CD8-positive, alpha-beta memory T cell (primary cell): ENCODE measurements at regions of chr20 and their contacts with region 1.

Region 1: DNA sequence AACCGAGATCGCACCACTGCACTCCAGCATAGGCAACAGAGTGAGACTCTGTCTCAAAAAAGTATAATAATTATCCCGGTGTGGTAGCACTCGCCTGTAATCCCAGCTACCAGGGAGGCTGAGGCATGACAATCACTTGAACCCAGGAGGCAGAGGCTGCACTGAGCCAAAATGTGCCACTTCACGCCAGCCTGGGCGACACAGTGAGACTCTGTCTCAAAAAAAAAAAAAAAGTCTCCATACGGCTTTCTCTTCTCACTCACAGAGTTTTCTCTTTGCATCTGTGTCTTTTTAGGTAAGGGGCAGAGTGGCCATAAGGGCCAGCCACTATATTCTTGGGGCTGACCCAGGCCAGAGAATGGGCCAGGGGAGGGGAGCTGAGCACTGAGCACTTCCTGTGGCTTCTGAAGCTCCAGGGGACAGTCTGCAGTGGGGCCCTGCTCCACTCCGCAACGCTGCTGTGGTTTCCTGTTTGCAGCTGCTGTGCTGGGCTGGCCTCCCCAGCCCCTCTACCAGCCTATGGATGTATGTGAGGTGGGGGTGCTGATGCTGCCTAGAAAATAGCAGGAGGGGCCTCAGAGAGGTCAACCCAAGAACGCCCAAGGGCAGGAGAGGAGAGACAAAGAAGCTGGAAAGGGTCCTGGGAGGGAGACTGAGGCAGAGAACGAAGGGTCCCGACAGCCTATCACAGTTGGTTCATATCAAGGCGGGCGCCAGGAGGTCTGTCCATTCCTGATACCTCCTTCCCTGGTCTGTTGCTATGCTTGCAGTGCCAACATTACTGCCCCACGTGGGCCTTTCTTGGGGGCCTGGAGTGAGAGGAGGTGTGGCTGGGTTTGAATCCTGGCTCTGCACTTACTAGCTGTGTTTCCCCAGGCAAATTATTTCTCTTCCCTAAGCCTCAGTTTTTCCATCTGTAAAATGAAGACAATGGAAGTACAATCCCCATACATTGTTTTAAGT is 16.0 kb downstream of the SLA2 start:
- DNase-seq: peak in 4 of 5 donors; percentile 31 to 75 (median 52)
- H3K4me3 ChIP-seq: peak overlapping the region; percentile 28
- H3K4me3 Mint-ChIP-seq: peak overlapping the region; percentile 43 to 87 (median 82)
- H3K27ac ChIP-seq: peak overlapping the region; percentile 25
- H3K27ac Mint-ChIP-seq: peak overlapping the region; percentile 97 to 98 (median 97)
- H3K4me1 ChIP-seq: peaks cover 39% of the 10 kb centered on the region
- H3K4me1 Mint-ChIP-seq: peaks cover 47 to 76% (median 56%) of the 10 kb centered on the region in 3 donors
- H3K27me3 ChIP-seq: no peaks in the 10 kb centered on the region
- H3K27me3 Mint-ChIP-seq: no peaks in the 10 kb centered on the region

Region 2: DNA sequence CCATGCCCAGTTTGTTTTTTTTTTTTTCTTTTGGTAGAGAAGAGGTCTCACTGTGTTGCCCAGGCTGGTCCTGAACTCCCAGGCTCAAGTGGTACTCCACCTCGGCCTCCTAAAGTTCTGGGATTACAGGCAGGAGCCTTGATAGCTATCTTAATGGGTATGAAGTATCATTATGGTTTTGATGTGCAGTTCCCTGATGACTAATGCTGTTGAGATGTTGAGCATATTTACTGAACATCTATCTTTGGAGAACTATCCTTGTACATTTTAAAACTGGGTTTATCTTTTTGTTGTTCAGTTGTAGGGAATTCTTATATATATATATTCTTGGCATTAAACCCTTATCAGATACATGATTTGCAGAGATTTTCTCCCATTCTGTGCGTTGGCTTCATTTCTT is 110.1 kb before region 1 on chr20:
- CTCF ChIA-PET with region 1: no interaction called
- POLR2A ChIA-PET with region 1: no interaction called
- DNase-seq: no peak
- H3K4me3 ChIP-seq: no peak overlapping the region
- H3K4me3 Mint-ChIP-seq: no peak overlapping the region
- H3K27ac ChIP-seq: no peak overlapping the region
- H3K27ac Mint-ChIP-seq: peak overlapping the region in 1 of 8 donors; percentile 49
- H3K4me1 ChIP-seq: no peaks in the 10 kb centered on the region
- H3K4me1 Mint-ChIP-seq: peaks cover 0 to 4% (median 0%) of the 10 kb centered on the region in 3 donors
- H3K27me3 ChIP-seq: no peaks in the 10 kb centered on the region
- H3K27me3 Mint-ChIP-seq: no peaks in the 10 kb centered on the region

Region 3: GRCh38 chr20:36611625-36612024 is 18.4 kb before region 1 on chr20:
- CTCF ChIA-PET with region 1: interaction called, 15 read pairs
- POLR2A ChIA-PET with region 1: interaction called, 7 read pairs
- DNase-seq: no peak
- H3K4me3 ChIP-seq: no peak overlapping the region
- H3K4me3 Mint-ChIP-seq: no peak overlapping the region
- H3K27ac ChIP-seq: no peak overlapping the region
- H3K27ac Mint-ChIP-seq: peak overlapping the region in 3 of 8 donors; percentile 23 to 75 (median 50)
- H3K4me1 ChIP-seq: peaks cover 17% of the 10 kb centered on the region
- H3K4me1 Mint-ChIP-seq: peaks cover 21 to 62% (median 25%) of the 10 kb centered on the region in 3 donors
- H3K27me3 ChIP-seq: no peaks in the 10 kb centered on the region
- H3K27me3 Mint-ChIP-seq: peaks cover 0 to 2% of the 10 kb centered on the region in 2 donors